ENCODE measurements at regions of chr21 and their contacts with region 1.

Region 1: GRCh38 chr21:38355992-38356797 is 99.4 kb downstream of the KCNJ15 start:
- DNase-seq: no peak
- ATAC-seq: peak; percentile 95
- H3K4me3 ChIP-seq: no peak overlapping the region
- H3K27ac ChIP-seq: no peak overlapping the region
- H3K4me1 ChIP-seq: no peaks in the 10 kb centered on the region
- H3K27me3 ChIP-seq: no peaks in the 10 kb centered on the region
- CTCF ChIP-seq: peak; percentile 93

Region 2: DNA sequence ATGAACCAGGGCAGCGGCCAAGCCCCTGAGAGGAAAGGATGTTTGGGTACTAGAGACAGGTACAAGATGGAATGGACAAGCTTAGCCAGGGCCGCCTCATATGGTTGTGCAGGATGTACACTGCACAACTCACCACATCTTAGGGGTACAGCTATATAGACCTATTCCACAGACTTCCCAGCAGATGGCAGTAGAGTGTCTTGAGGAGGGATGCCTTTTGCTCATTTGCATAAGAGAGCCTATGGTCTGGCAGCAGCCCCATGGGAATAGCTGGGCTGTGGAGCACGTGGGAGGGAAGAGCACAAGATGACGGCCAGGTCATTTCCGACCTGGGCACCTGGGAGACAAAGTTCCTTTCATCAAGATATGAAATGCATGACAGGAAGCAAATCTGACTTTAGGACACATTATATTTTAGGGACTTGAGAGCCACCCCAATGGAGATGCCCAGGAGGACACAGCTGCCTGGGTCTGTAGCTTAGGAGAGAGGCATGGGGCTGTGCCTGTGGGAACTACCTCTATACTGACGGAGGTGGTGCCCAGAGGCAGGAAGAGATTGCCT is 655.5 kb before region 1 on chr21:
- CTCF ChIA-PET with region 1: no interaction called
- POLR2A ChIA-PET with region 1: no interaction called
- in situ Hi-C with region 1: no loop called
- intact Hi-C with region 1: loop called (anchors 10 kb)
- DNase-seq: peak; percentile 15
- ATAC-seq: peak; percentile 94
- H3K4me3 ChIP-seq: no peak overlapping the region
- H3K27ac ChIP-seq: no peak overlapping the region
- H3K4me1 ChIP-seq: no peaks in the 10 kb centered on the region
- H3K27me3 ChIP-seq: no peaks in the 10 kb centered on the region
- CTCF ChIP-seq: peak; percentile 73

Region 3: GRCh38 chr21:38159355-38159754 is 196.8 kb before region 1 on chr21:
- CTCF ChIA-PET with region 1: interaction called, 4 read pairs
- POLR2A ChIA-PET with region 1: no interaction called
- in situ Hi-C with region 1: no loop called
- intact Hi-C with region 1: loop called (anchors 5 kb)
- DNase-seq: peak; percentile 33
- ATAC-seq: no peak; the same call in 1 of the 2 replicates
- H3K4me3 ChIP-seq: no peak overlapping the region
- H3K27ac ChIP-seq: no peak overlapping the region
- H3K4me1 ChIP-seq: no peaks in the 10 kb centered on the region
- H3K27me3 ChIP-seq: no peaks in the 10 kb centered on the region
- CTCF ChIP-seq: peak; percentile 77

Region 4: GRCh38 chr21:38170280-38170679 is 185.9 kb before region 1 on chr21:
- CTCF ChIA-PET with region 1: interaction called, 7 read pairs
- POLR2A ChIA-PET with region 1: no interaction called
- in situ Hi-C with region 1: no loop called
- intact Hi-C with region 1: loop called (anchors 5 kb)
- DNase-seq: no peak
- ATAC-seq: no peak
- H3K4me3 ChIP-seq: no peak overlapping the region
- H3K27ac ChIP-seq: no peak overlapping the region
- H3K4me1 ChIP-seq: no peaks in the 10 kb centered on the region
- H3K27me3 ChIP-seq: no peaks in the 10 kb centered on the region
- CTCF ChIP-seq: peak; percentile 55

Region 5: GRCh38 chr21:38223893-38224540 is 132.2 kb before region 1 on chr21:
- CTCF ChIA-PET with region 1: no interaction called
- POLR2A ChIA-PET with region 1: no interaction called
- in situ Hi-C with region 1: no loop called
- intact Hi-C with region 1: loop called (anchors 5 kb)
- DNase-seq: no peak
- ATAC-seq: no peak
- H3K4me3 ChIP-seq: no peak overlapping the region
- H3K27ac ChIP-seq: no peak overlapping the region
- H3K4me1 ChIP-seq: no peaks in the 10 kb centered on the region
- H3K27me3 ChIP-seq: no peaks in the 10 kb centered on the region
- CTCF ChIP-seq: no peak

Region 6: DNA sequence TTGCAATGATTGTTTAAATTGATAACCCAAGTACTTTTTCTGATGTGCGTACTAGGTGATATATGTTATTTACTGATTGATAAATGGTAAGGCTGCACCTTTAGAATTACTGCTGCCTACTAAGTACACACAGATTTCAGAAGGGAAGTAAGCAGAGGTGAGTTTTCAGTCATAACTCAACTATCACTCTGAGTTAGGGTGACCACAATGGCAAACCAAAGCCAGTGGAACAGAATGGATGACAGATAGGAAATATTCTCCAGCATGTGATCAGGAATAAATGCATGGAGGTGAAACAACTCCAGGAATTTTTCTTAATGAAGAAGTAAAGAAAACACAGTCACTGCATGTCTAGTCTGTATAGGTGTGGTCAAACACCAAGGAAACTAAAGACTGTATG is 106.9 kb before region 1 on chr21:
- CTCF ChIA-PET with region 1: no interaction called
- POLR2A ChIA-PET with region 1: no interaction called
- in situ Hi-C with region 1: no loop called
- intact Hi-C with region 1: no loop called
- DNase-seq: no peak
- ATAC-seq: no peak
- H3K4me3 ChIP-seq: no peak overlapping the region
- H3K27ac ChIP-seq: no peak overlapping the region
- H3K4me1 ChIP-seq: no peaks in the 10 kb centered on the region
- H3K27me3 ChIP-seq: no peaks in the 10 kb centered on the region
- CTCF ChIP-seq: no peak

Region 7: GRCh38 chr21:38979228-38980121 is 623.3 kb after region 1 on chr21:
- CTCF ChIA-PET with region 1: no interaction called
- POLR2A ChIA-PET with region 1: no interaction called
- in situ Hi-C with region 1: no loop called
- intact Hi-C with region 1: no loop called
- DNase-seq: no peak
- ATAC-seq: no peak
- H3K4me3 ChIP-seq: no peak overlapping the region
- H3K27ac ChIP-seq: no peak overlapping the region
- H3K4me1 ChIP-seq: no peaks in the 10 kb centered on the region
- H3K27me3 ChIP-seq: no peaks in the 10 kb centered on the region
- CTCF ChIP-seq: no peak

Measured in Panc1 (cell line).